ENCODE measurements at regions of chr1 and their contacts with region 1.

Region 1: DNA sequence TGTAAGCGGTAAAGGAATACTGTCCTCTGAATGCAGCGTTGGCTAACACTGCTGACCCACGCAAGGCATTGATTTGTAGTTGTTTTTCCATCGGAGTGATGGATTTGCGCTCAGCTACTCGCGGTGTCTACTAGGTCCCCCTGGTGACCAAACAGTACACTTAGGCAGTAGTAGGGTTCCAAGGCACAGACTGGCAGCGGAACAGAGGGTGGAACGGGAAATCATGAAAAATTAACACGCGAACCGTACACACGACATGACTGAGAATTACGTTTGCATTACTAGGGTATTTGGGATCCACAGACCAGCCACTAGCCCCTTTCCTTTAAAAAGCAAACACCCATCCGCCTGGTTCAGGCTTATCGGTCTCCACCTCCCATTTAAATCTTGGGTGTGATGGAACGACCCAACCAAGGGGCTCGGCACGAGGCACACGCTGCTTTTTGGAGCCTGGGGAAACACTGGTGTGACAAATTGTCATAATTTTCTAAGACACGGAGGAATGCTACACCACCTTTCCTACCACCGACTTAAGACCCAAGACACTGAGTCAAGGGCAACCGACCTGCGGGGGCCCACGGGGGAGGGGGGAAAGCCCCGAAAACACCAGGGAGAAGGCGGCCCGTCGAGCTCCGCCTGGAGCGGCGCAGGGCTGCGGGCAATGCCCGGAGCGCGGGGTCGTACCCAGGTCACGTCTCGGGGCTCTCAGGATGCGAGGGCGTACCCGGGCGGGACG is 699 bp downstream of the DIPK1A start:
- DNase-seq: no peak
- H3K4me3 ChIP-seq: peak overlapping the region; percentile 55 to 81 (median 63)
- H3K27ac ChIP-seq: no peak overlapping the region
- H3K4me1 ChIP-seq: peaks cover 0 to 4% (median 1%) of the 10 kb centered on the region in 4 experiments; a peak in 4 of 7 replicates
- H3K27me3 ChIP-seq: peaks cover 0 to 7% (median 2%) of the 10 kb centered on the region in 4 experiments; a peak in 4 of 7 replicates
- CTCF ChIP-seq: peak; percentile 57 to 69 (median 59)
- EP300 ChIP-seq: no peak
- POLR2A ChIP-seq: no peak
- RAD21 ChIP-seq: peak; percentile 55 to 65

Region 2: DNA sequence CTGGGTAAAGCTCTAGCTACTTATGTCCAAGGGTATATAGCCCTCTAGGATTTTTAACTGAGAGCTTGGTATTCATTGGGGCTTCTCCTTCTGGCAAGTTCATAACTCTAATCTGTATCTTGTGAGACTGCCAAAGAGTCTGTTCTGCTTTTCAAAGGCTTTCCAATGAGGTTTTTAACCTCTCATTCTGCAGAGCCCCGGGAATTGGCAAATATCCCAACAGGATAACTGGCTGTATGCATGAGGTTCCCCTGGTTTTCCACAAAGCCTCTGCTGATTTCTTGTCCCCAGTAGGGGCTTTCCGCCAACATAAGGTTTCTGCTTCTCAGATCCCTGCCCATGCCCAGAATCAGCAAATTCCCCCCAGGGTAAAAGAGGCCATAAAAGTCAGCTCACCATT is 87.8 kb before region 1 on chr1:
- CTCF ChIA-PET with region 1: interaction called, 11 read pairs
- POLR2A ChIA-PET with region 1: interaction called, 3 read pairs
- DNase-seq: no peak
- H3K4me3 ChIP-seq: no peak overlapping the region
- H3K27ac ChIP-seq: no peak overlapping the region
- H3K4me1 ChIP-seq: no peaks in the 10 kb centered on the region; a peak in 1 of 7 replicates
- H3K27me3 ChIP-seq: no peaks in the 10 kb centered on the region
- CTCF ChIP-seq: no peak
- EP300 ChIP-seq: no peak
- POLR2A ChIP-seq: no peak
- RAD21 ChIP-seq: no peak

Region 3: DNA sequence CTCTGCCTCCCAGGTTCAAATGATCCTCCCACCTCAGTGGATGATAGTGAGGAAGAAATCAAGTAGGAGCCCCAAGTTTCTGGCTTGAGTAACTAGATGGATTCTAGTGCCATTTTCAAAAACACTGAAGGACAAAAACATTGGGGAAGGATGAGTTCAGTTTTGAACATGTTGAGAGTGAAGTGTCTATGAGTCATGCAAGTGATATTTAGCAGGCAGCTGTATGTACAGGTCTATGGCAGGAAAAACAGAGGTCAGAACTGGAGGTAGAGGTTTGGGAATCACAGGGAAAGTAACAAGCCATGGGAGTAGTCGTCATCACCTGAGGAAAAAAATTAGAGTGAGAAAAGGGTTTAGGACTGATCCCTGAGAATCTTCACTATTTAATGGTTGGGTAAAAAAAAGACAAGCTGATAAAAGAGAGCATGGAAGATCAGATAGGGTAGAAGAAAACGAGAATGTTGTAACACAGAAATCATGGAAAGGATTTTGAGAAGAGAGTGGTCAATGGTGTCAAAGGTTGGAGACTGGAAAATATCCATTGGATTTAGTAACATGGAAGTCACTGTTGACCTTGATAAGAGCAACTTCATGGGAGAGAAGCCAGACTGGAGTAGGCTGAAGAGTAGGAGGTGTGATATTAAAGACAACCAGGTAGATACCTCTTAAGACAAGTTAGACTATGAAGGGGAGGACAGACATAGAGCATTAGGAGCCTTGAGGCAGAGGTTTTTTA is 52.4 kb before region 1 on chr1:
- CTCF ChIA-PET with region 1: no interaction called
- POLR2A ChIA-PET with region 1: no interaction called
- DNase-seq: no peak
- H3K4me3 ChIP-seq: no peak overlapping the region
- H3K27ac ChIP-seq: no peak overlapping the region
- H3K4me1 ChIP-seq: no peaks in the 10 kb centered on the region
- H3K27me3 ChIP-seq: no peaks in the 10 kb centered on the region
- CTCF ChIP-seq: no peak
- EP300 ChIP-seq: no peak
- POLR2A ChIP-seq: no peak
- RAD21 ChIP-seq: no peak

Region 4: GRCh38 chr1:92944901-92945747 is 15.4 kb before region 1 on chr1:
- CTCF ChIA-PET with region 1: interaction called, 13 read pairs
- POLR2A ChIA-PET with region 1: interaction called, 4 read pairs
- DNase-seq: no peak
- H3K4me3 ChIP-seq: no peak overlapping the region
- H3K27ac ChIP-seq: no peak overlapping the region
- H3K4me1 ChIP-seq: no peaks in the 10 kb centered on the region
- H3K27me3 ChIP-seq: no peaks in the 10 kb centered on the region
- CTCF ChIP-seq: no peak
- EP300 ChIP-seq: no peak
- POLR2A ChIP-seq: no peak
- RAD21 ChIP-seq: no peak

Region 5: GRCh38 chr1:92987462-92987861 is 26.9 kb after region 1 on chr1:
- CTCF ChIA-PET with region 1: no interaction called
- POLR2A ChIA-PET with region 1: no interaction called
- DNase-seq: no peak
- H3K4me3 ChIP-seq: no peak overlapping the region
- H3K27ac ChIP-seq: no peak overlapping the region
- H3K4me1 ChIP-seq: no peaks in the 10 kb centered on the region
- H3K27me3 ChIP-seq: no peaks in the 10 kb centered on the region
- CTCF ChIP-seq: no peak
- EP300 ChIP-seq: no peak
- POLR2A ChIP-seq: no peak
- RAD21 ChIP-seq: no peak

Region 6: GRCh38 chr1:93000751-93001175 is 40.2 kb after region 1 on chr1:
- CTCF ChIA-PET with region 1: interaction called, 18 read pairs
- POLR2A ChIA-PET with region 1: no interaction called
- DNase-seq: no peak
- H3K4me3 ChIP-seq: peak overlapping the region in 1 of 4 experiments; percentile 20; a peak in 1 of 8 replicates
- H3K27ac ChIP-seq: no peak overlapping the region
- H3K4me1 ChIP-seq: peaks cover 0 to 8% (median 5%) of the 10 kb centered on the region in 4 experiments; a peak in 3 of 7 replicates
- H3K27me3 ChIP-seq: no peaks in the 10 kb centered on the region
- CTCF ChIP-seq: no peak
- EP300 ChIP-seq: no peak
- POLR2A ChIP-seq: no peak
- RAD21 ChIP-seq: no peak